Heart left ventricle (tissue), 16 donors: ENCODE measurements at regions of chr3 and their contacts with region 1.

Region 1: GRCh38 chr3:16600780-16601539 is 4.3 kb downstream of the DAZL start:
- DNase-seq: peak; percentile 73 to 85 (median 80)
- ATAC-seq: peak; percentile 48 to 76 (median 68)
- H3K4me3 ChIP-seq: peak overlapping the region in 3 of 12 donors; percentile 0 to 19 (median 14)
- H3K27ac ChIP-seq: no peak overlapping the region
- H3K4me1 ChIP-seq: peaks cover 0 to 7% (median 0%) of the 10 kb centered on the region in 12 donors
- H3K27me3 ChIP-seq: no peaks in the 10 kb centered on the region
- CTCF ChIP-seq: peak; percentile 73 to 96 (median 89)
- POLR2A ChIP-seq: no peak

Region 2: GRCh38 chr3:16482770-16483531 is 118.0 kb before region 1 on chr3:
- intact Hi-C with region 1: no loop called
- DNase-seq: peak in 1 of 5 donors; percentile 44
- ATAC-seq: peak in 2 of 4 donors; percentile 50 to 64
- H3K4me3 ChIP-seq: no peak overlapping the region
- H3K27ac ChIP-seq: peak overlapping the region in 5 of 12 donors; percentile 4 to 82 (median 18)
- H3K4me1 ChIP-seq: peaks cover 0 to 68% (median 36%) of the 10 kb centered on the region in 12 donors
- H3K27me3 ChIP-seq: no peaks in the 10 kb centered on the region
- CTCF ChIP-seq: no peak
- POLR2A ChIP-seq: no peak

Region 3: GRCh38 chr3:16789344-16790120 is 188.6 kb after region 1 on chr3:
- intact Hi-C with region 1: no loop called
- DNase-seq: no peak
- ATAC-seq: no peak
- H3K4me3 ChIP-seq: no peak overlapping the region
- H3K27ac ChIP-seq: no peak overlapping the region
- H3K4me1 ChIP-seq: peaks cover 0 to 32% (median 3%) of the 10 kb centered on the region in 12 donors
- H3K27me3 ChIP-seq: no peaks in the 10 kb centered on the region
- CTCF ChIP-seq: no peak
- POLR2A ChIP-seq: no peak

Region 4: DNA sequence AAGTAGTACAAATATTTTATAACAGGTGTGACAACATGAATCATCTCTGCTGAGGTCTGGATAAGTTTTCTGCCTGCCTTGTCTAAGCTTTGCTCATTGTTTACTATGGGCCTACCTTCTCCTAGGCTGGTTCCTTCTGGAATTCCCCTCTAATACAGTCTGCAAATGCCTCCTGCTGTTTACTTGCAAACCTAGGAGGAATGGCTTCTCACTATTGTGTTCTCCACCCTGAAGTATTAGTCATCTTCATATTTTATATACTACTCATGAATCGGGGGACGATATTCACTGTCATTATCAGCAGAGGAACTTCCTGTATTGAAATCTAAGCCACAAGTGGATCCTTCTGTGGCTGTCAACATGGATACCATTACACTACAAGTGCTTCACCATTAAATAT is 438.6 kb after region 1 on chr3:
- intact Hi-C with region 1: loop called (anchors 5 to 10 kb)
- DNase-seq: no peak
- ATAC-seq: peak in 3 of 4 donors; percentile 61 to 65 (median 65)
- H3K4me3 ChIP-seq: no peak overlapping the region
- H3K27ac ChIP-seq: peak overlapping the region in 9 of 12 donors; percentile 2 to 65 (median 51)
- H3K4me1 ChIP-seq: peaks cover 0 to 49% (median 16%) of the 10 kb centered on the region in 12 donors
- H3K27me3 ChIP-seq: no peaks in the 10 kb centered on the region
- CTCF ChIP-seq: peak in 1 of 12 donors; percentile 12
- POLR2A ChIP-seq: no peak

Region 5: GRCh38 chr3:17412950-17413530 is 812.1 kb after region 1 on chr3:
- intact Hi-C with region 1: loop called in 9 of 10 experiments (anchors 2 to 10 kb)
- DNase-seq: no peak
- ATAC-seq: peak in 3 of 4 donors; percentile 41 to 64 (median 54)
- H3K4me3 ChIP-seq: no peak overlapping the region
- H3K27ac ChIP-seq: no peak overlapping the region
- H3K4me1 ChIP-seq: peaks cover 0 to 4% (median 0%) of the 10 kb centered on the region in 12 donors
- H3K27me3 ChIP-seq: no peaks in the 10 kb centered on the region
- CTCF ChIP-seq: peak; percentile 66 to 86 (median 80)
- POLR2A ChIP-seq: no peak